ENCODE measurements at regions of chr4 and their contacts with region 1.

Region 1: GRCh38 chr4:119041951-119042560 is 93.6 kb upstream of the MYOZ2 start:
- DNase-seq: peak; percentile 45 to 75
- H3K4me3 ChIP-seq: no peak overlapping the region
- H3K27ac ChIP-seq: peak overlapping the region; percentile 86 to 91
- H3K4me1 ChIP-seq: peaks cover 0 to 100% (median 60%) of the 10 kb centered on the region in 4 donors
- H3K27me3 ChIP-seq: no peaks in the 10 kb centered on the region
- CTCF ChIP-seq: peak; percentile 60 to 70

Region 2: DNA sequence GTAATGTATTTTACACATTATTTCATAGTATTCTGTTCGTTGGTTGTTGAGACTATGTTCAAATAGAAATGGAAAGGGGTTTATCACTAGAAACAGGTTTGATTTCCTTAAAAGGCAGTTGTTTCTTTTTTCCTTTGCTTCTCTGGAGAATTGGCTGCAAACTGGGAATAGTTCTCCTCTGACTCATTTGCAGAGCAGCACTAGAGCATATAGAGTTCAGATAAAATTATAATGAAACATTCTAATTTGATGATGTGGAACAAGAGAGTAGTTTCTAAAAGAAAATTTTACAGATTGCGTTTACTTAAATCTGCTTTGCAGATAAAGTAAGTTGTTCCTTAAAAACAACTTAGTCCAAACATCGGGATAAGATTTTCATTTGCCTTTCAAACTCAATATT is 123.7 kb before region 1 on chr4:
- intact Hi-C with region 1: loop called (anchors 10 kb)
- DNase-seq: no peak
- H3K4me3 ChIP-seq: no peak overlapping the region
- H3K27ac ChIP-seq: peak overlapping the region; percentile 84 to 90
- H3K4me1 ChIP-seq: peaks cover 0 to 94% (median 28%) of the 10 kb centered on the region in 4 donors
- H3K27me3 ChIP-seq: no peaks in the 10 kb centered on the region
- CTCF ChIP-seq: no peak

Region 3: GRCh38 chr4:118981839-118982381 is 60.1 kb before region 1 on chr4:
- intact Hi-C with region 1: loop called (anchors 5 kb)
- DNase-seq: peak in 1 of 2 donors; percentile 67
- H3K4me3 ChIP-seq: no peak overlapping the region
- H3K27ac ChIP-seq: peak overlapping the region; percentile 86
- H3K4me1 ChIP-seq: peaks cover 0 to 96% (median 50%) of the 10 kb centered on the region in 4 donors
- H3K27me3 ChIP-seq: no peaks in the 10 kb centered on the region
- CTCF ChIP-seq: peak; percentile 80 to 81

Region 4: DNA sequence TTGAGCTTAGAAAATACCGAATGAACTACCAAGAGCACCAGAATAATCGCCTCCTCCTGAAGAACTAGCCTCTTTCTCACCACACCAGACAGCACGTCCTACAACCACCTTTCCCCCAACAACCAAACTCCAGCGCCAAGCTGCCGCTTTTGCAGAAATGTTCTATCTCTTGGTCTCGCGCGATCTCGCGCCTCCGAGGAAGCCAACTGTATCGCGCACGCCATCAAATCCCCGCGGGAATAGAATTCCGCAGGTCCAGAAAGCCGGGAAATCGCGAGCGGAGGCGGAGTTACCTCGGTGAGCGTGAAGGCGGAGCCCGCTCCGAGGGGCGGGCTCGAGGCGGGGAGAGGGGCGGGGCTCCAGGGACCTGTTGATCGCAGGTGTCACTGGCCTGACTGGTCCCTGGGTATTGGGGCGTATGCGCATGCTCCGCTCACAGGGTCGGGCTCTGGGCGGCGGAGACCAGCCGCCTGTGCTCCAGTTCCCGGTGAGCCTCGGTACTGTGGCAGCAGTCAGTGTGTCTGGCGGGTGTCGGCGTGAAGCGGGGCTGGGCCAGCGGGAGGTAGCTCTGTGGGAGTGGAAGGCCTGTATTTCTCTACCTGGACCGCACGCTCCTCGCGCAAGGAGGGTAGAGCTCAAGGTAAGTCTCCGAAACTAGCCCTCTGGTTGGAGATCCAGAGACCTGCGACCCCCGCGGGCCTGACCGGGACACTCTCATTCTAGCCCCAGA is 170.3 kb after region 1 on chr4 and contains the start of gene USP53:
- intact Hi-C with region 1: loop called (anchors 5 kb)
- DNase-seq: peak; percentile 98 to 100
- H3K4me3 ChIP-seq: peak within 1 kb of the TSS; percentile 81 to 89
- H3K27ac ChIP-seq: peak within 1 kb of the TSS; percentile 97 to 98
- H3K4me1 ChIP-seq: peaks cover 0 to 26% (median 0%) of the 10 kb centered on the region in 4 donors
- H3K27me3 ChIP-seq: no peaks in the 10 kb centered on the region
- CTCF ChIP-seq: no peak

Region 5: DNA sequence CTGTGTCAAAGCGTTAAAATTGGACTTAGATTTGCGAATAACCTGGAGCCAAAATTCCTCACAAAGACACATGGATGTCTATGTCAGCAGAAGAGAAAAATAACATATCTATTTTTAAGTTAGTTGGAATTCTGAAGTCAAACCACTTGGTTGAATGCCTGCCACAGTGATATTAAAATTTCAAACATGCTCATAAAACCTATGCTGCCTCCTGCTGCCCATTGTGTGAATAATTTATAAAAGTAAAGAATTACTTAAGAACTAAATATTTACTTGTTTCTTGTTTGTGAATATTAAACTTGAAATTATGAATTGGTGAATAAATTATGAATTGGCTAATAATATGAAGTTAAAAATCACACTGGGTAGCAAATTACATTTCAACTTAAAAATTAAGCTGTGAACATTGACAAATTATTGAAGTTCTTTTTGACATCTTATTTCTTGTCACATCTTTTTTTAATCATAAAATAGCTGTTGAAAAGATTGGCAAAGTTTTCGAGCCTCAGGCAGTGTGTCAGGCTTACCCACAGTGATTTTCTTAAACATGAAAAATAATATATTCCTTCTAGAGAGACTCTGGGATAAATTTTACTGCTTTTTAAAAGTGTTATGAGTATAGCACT is 244.4 kb after region 1 on chr4:
- intact Hi-C with region 1: loop called (anchors 10 kb)
- DNase-seq: no peak
- H3K4me3 ChIP-seq: no peak overlapping the region
- H3K27ac ChIP-seq: peak overlapping the region in 1 of 2 donors; percentile 58
- H3K4me1 ChIP-seq: peaks cover 0 to 30% (median 17%) of the 10 kb centered on the region in 4 donors
- H3K27me3 ChIP-seq: no peaks in the 10 kb centered on the region
- CTCF ChIP-seq: peak; percentile 53 to 77